ENCODE measurements at regions of chr1 and their contacts with region 1.

Region 1: GRCh38 chr1:231603598-231604275 is 22.9 kb upstream of the DISC1 start:
- DNase-seq: peak in 3 of 5 donors; percentile 21 to 60 (median 53)
- H3K4me3 ChIP-seq: peak overlapping the region; percentile 85
- H3K4me3 Mint-ChIP-seq: peak overlapping the region; percentile 87 to 95 (median 92)
- H3K27ac ChIP-seq: no peak overlapping the region
- H3K27ac Mint-ChIP-seq: peak overlapping the region; percentile 14 to 92 (median 81)
- H3K4me1 ChIP-seq: no peaks in the 10 kb centered on the region
- H3K4me1 Mint-ChIP-seq: peaks cover 8 to 11% (median 9%) of the 10 kb centered on the region in 3 donors
- H3K27me3 ChIP-seq: no peaks in the 10 kb centered on the region
- H3K27me3 Mint-ChIP-seq: peaks cover 0 to 5% of the 10 kb centered on the region in 2 donors

Region 2: GRCh38 chr1:231322880-231323530 is 280.7 kb before region 1 on chr1:
- CTCF ChIA-PET with region 1: no interaction called
- POLR2A ChIA-PET with region 1: no interaction called
- DNase-seq: no peak
- H3K4me3 ChIP-seq: no peak overlapping the region
- H3K4me3 Mint-ChIP-seq: no peak overlapping the region
- H3K27ac ChIP-seq: no peak overlapping the region
- H3K27ac Mint-ChIP-seq: no peak overlapping the region
- H3K4me1 ChIP-seq: no peaks in the 10 kb centered on the region
- H3K4me1 Mint-ChIP-seq: no peaks in the 10 kb centered on the region
- H3K27me3 ChIP-seq: no peaks in the 10 kb centered on the region
- H3K27me3 Mint-ChIP-seq: no peaks in the 10 kb centered on the region

Region 3: DNA sequence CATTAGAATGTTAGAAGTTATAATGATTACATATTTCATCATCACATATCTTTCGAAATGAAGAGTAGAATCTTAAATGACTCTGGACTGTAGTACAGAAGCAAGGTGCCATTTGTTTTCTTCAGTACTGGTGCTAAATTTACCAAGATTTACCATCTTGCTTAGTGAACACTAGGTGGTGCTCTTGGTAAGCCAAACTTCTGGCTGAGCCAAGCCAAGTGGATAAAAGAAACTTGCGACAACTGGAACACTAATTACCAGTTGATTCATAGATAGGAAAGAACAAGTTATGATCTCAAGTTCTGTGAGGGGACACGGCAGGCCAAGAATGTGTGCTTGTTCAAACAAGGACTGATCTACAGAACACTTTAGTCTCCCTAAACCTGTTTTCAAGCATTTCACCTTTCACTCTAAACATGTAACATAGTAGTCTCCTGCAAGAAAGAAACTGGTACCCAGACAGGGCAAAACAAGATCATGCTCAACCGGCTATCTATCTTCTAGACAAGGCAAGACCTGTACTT is 245.8 kb before region 1 on chr1:
- CTCF ChIA-PET with region 1: interaction called, 14 read pairs
- POLR2A ChIA-PET with region 1: no interaction called
- DNase-seq: peak in 3 of 5 donors; percentile 47 to 58 (median 47)
- H3K4me3 ChIP-seq: no peak overlapping the region
- H3K4me3 Mint-ChIP-seq: no peak overlapping the region
- H3K27ac ChIP-seq: no peak overlapping the region
- H3K27ac Mint-ChIP-seq: peak overlapping the region in 6 of 8 donors; percentile 8 to 70 (median 25)
- H3K4me1 ChIP-seq: no peaks in the 10 kb centered on the region
- H3K4me1 Mint-ChIP-seq: peaks cover 8 to 18% (median 10%) of the 10 kb centered on the region in 3 donors
- H3K27me3 ChIP-seq: no peaks in the 10 kb centered on the region
- H3K27me3 Mint-ChIP-seq: no peaks in the 10 kb centered on the region

Region 4: GRCh38 chr1:231372501-231372900 is 231.2 kb before region 1 on chr1:
- CTCF ChIA-PET with region 1: no interaction called
- POLR2A ChIA-PET with region 1: interaction called, 12 read pairs
- DNase-seq: no peak
- H3K4me3 ChIP-seq: no peak overlapping the region
- H3K4me3 Mint-ChIP-seq: no peak overlapping the region
- H3K27ac ChIP-seq: no peak overlapping the region
- H3K27ac Mint-ChIP-seq: peak overlapping the region in 1 of 8 donors; percentile 64
- H3K4me1 ChIP-seq: peaks cover 11% of the 10 kb centered on the region
- H3K4me1 Mint-ChIP-seq: peaks cover 19 to 24% (median 22%) of the 10 kb centered on the region in 3 donors
- H3K27me3 ChIP-seq: no peaks in the 10 kb centered on the region
- H3K27me3 Mint-ChIP-seq: no peaks in the 10 kb centered on the region

Region 5: GRCh38 chr1:231528172-231529029 is 75.3 kb before region 1 on chr1 and contains the start of gene TSNAX:
- CTCF ChIA-PET with region 1: no interaction called
- POLR2A ChIA-PET with region 1: no interaction called
- DNase-seq: peak; percentile 84 to 94 (median 92)
- H3K4me3 ChIP-seq: peak within 1 kb of the TSS; percentile 77
- H3K4me3 Mint-ChIP-seq: peak within 1 kb of the TSS; percentile 94 to 99 (median 97)
- H3K27ac ChIP-seq: peak within 1 kb of the TSS; percentile 95
- H3K27ac Mint-ChIP-seq: peak within 1 kb of the TSS; percentile 95 to 100 (median 100)
- H3K4me1 ChIP-seq: peaks cover 36% of the 10 kb centered on the region
- H3K4me1 Mint-ChIP-seq: peaks cover 39 to 53% (median 52%) of the 10 kb centered on the region in 3 donors
- H3K27me3 ChIP-seq: no peaks in the 10 kb centered on the region
- H3K27me3 Mint-ChIP-seq: no peaks in the 10 kb centered on the region
- total RNA-seq, gene TSNAX: 48.0 to 49.8 TPM